ENCODE measurements at regions of chr9 and their contacts with region 1.

Region 1: GRCh38 chr9:122125158-122125508 is 32.0 kb upstream of the TTLL11 start:
- DNase-seq: peak; percentile 70
- H3K4me3 ChIP-seq: no peak overlapping the region
- H3K27ac ChIP-seq: no peak overlapping the region
- H3K4me1 ChIP-seq: peaks cover 22% of the 10 kb centered on the region
- H3K27me3 ChIP-seq: no peaks in the 10 kb centered on the region
- CTCF ChIP-seq: peak; percentile 90 to 99

Region 2: DNA sequence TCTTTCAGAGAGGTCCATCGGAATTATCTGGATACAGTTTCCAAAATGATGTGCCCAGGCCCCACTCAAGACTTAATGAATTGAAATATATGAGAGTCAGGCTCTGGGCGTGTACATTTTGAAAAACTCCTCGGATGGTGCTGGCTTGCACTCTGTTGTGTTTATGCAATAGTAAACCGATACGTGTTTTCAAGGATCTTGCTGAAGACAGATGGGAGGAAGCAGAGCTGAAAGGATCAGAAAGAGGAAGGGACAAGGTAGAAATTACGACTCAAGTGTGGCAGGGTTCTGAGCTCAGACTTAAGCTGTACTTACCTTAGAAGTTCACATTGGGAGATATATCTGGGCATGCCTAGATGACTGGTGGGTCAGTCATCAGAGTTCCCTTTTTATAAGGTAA is 741.4 kb before region 1 on chr9:
- CTCF ChIA-PET with region 1: no interaction called
- dilution Hi-C with region 1: no loop called
- in situ Hi-C with region 1: no loop called
- intact Hi-C with region 1: no loop called
- DNase-seq: no peak
- H3K4me3 ChIP-seq: no peak overlapping the region
- H3K27ac ChIP-seq: no peak overlapping the region
- H3K4me1 ChIP-seq: no peaks in the 10 kb centered on the region
- H3K27me3 ChIP-seq: no peaks in the 10 kb centered on the region
- CTCF ChIP-seq: no peak

Region 3: DNA sequence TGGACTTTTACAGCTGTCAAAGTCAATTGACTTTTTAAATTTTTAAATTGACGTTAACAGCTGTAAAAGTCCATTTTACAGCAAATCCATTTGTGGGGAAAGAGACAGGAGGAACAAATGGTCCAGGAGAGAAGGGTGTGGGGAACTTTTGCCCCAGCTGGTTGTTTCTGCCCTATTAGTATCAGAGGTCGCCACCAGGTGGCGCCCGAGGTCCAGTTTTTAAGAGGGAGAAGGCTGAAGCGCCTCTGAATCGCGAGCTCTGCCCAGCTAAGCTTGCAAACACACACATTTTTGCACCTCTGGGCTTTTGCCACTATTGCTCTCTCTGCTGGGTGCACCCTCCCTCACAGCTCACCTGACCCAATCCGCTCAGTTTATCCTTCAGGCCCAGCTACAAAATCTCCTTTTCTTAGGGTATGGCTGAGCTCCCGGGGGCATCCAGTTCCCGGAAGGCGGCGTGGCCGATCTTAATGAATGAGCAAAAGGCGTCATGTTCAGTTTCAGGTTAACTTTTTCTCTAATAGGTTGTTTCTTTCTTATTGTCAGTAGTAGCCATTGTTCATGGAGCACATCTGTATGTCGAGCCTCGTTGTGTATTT is 25.8 kb before region 1 on chr9:
- CTCF ChIA-PET with region 1: interaction called, 6 read pairs
- dilution Hi-C with region 1: no loop called
- in situ Hi-C with region 1: no loop called
- intact Hi-C with region 1: loop called (anchors 1 kb)
- DNase-seq: peak; percentile 54
- H3K4me3 ChIP-seq: peak overlapping the region in 2 of 3 experiments; percentile 1 to 17
- H3K27ac ChIP-seq: no peak overlapping the region
- H3K4me1 ChIP-seq: no peaks in the 10 kb centered on the region
- H3K27me3 ChIP-seq: no peaks in the 10 kb centered on the region
- CTCF ChIP-seq: peak; percentile 76 to 81

Region 4: DNA sequence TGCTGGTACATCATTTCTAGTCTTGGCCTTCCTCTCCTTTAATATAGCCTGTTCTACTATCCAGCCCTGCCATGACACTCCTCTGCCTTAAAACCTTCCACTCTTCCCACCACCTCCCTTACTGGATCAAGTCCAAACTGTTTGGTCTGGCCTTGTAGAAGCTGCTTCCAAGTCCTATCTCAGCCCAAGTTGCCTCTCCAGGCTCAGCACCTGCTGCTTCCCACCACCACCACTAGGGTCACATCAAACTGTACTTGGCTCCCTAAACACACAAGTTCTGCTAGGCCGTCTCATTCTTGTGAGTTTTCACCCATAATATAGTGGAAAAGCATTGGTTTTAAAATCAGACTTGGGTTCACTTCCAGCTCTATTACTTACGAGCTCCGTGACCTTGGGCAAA is 33.1 kb after region 1 on chr9:
- CTCF ChIA-PET with region 1: no interaction called
- dilution Hi-C with region 1: no loop called
- in situ Hi-C with region 1: no loop called
- intact Hi-C with region 1: no loop called
- DNase-seq: peak; percentile 39
- H3K4me3 ChIP-seq: no peak overlapping the region
- H3K27ac ChIP-seq: no peak overlapping the region
- H3K4me1 ChIP-seq: peaks cover 3% of the 10 kb centered on the region
- H3K27me3 ChIP-seq: no peaks in the 10 kb centered on the region
- CTCF ChIP-seq: peak; percentile 65 to 82

Region 5: DNA sequence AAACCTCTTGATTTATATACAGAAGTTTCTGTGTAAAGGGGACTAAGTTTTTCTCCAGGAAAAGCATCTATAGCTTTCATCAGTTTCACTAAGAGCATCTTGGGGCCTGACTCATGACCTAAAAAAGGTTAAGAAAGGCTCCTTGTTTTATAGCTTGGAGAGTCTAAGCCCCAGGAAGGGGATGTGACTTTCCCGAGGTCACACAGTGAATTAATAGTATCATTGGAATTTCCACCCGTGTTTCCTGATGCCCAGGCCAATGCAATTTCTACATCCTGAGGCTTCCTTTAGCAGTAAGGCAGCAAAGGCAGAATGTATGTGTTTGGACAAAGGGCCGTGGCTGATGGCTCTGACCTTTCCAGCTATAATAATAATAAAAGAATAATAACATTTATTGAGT is 43.2 kb after region 1 on chr9:
- CTCF ChIA-PET with region 1: no interaction called
- dilution Hi-C with region 1: no loop called
- in situ Hi-C with region 1: no loop called
- intact Hi-C with region 1: no loop called
- DNase-seq: peak; percentile 34
- H3K4me3 ChIP-seq: no peak overlapping the region
- H3K27ac ChIP-seq: no peak overlapping the region
- H3K4me1 ChIP-seq: no peaks in the 10 kb centered on the region
- H3K27me3 ChIP-seq: no peaks in the 10 kb centered on the region
- CTCF ChIP-seq: no peak

Region 6: DNA sequence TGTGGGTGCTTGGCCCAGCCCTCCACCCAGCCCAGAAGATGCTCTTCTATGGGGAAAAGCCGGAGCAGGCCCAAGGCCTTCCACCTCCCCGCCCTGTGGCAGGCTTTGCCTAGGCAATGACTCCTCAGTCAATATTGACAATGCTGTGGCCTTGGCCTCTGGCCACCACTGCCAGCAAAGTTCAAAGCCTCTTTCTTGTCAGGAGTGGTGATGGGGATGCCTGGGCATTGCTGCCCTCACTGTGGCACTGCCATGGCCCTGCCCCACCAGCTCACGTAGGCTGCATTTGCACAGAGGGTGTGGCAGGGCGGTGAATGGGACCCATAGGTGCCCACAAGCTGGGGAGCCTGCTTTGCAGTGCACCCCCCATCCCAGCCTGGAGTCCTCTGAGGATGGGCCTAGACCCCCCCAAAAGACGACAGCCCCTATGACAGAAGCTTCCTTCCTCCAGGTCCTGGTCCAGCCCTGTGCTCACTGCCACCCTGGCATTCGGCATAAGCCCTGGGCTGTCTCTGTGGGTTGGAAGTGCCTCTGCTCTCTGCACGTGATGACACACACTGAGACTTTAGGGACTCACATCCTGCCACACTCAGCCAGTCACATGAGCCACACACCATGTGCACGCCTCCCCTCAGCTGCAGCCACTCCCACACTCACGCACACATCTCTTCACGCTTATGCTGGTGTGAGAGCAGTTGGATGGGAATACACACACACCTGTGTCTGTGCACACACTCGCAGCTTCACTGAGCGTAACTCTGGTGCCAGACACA is 65.7 kb after region 1 on chr9:
- CTCF ChIA-PET with region 1: no interaction called
- dilution Hi-C with region 1: no loop called
- in situ Hi-C with region 1: no loop called
- intact Hi-C with region 1: loop called (anchors 1 kb)
- DNase-seq: peak; percentile 62
- H3K4me3 ChIP-seq: no peak overlapping the region
- H3K27ac ChIP-seq: peak overlapping the region; percentile 51
- H3K4me1 ChIP-seq: peaks cover 24% of the 10 kb centered on the region
- H3K27me3 ChIP-seq: no peaks in the 10 kb centered on the region
- CTCF ChIP-seq: no peak

Region 7: GRCh38 chr9:122264360-122265148 is 139.4 kb after region 1 on chr9 and contains the starts of genes MRRF and RBM18:
- CTCF ChIA-PET with region 1: interaction called, 5 read pairs
- dilution Hi-C with region 1: no loop called
- in situ Hi-C with region 1: no loop called
- intact Hi-C with region 1: loop called (anchors 1 kb)
- DNase-seq: peak; percentile 91
- H3K4me3 ChIP-seq: peak within 1 kb of the TSS; percentile 72 to 80 (median 77)
- H3K27ac ChIP-seq: peak within 1 kb of the TSS; percentile 95
- H3K4me1 ChIP-seq: peaks cover 28% of the 10 kb centered on the region
- H3K27me3 ChIP-seq: no peaks in the 10 kb centered on the region
- CTCF ChIP-seq: no peak
- total RNA-seq, gene MRRF: 43.0 to 52.0 TPM
- total RNA-seq, gene RBM18: 14.3 to 39.7 TPM

Region 8: DNA sequence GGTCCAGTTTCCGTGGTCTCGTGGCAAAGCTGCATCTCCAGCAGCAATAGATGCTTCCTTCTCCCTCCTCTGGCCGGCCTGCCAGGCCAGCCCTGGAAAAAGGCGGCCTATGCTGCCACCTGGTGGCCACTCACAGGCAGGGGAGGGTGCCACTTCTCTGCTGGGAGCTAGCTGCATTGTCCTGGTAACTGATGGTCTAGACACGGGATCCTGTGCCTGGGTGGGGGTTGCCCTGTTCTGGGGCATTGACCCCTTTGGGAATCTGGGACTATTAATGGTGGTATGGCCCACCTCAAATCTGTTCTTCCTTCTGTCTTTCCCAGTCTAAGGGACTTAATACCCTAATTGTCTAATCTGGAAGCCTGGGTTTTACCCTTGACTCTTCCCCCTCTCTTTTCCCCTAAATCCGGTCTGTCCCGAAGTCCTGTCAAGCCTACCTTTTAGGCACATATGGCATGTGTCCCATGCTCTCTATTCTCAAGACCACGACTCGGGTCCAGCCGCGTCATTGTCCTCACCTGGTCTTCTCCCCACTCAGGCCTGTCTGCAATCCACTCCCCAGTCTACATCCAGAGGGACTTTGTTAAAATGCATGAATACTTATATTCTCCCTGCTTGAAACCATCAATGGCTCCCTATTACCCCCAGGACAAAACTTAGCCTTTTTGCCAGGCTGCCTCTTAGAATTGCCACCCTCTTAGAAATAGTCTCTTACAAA is 225.7 kb after region 1 on chr9:
- CTCF ChIA-PET with region 1: interaction called, 10 read pairs
- dilution Hi-C with region 1: no loop called
- in situ Hi-C with region 1: loop called in 1 of 2 experiments (anchors 5 kb)
- intact Hi-C with region 1: loop called (anchors 1 kb)
- DNase-seq: peak; percentile 60
- H3K4me3 ChIP-seq: no peak overlapping the region
- H3K27ac ChIP-seq: no peak overlapping the region
- H3K4me1 ChIP-seq: peaks cover 13% of the 10 kb centered on the region
- H3K27me3 ChIP-seq: no peaks in the 10 kb centered on the region
- CTCF ChIP-seq: peak; percentile 94

Region 9: DNA sequence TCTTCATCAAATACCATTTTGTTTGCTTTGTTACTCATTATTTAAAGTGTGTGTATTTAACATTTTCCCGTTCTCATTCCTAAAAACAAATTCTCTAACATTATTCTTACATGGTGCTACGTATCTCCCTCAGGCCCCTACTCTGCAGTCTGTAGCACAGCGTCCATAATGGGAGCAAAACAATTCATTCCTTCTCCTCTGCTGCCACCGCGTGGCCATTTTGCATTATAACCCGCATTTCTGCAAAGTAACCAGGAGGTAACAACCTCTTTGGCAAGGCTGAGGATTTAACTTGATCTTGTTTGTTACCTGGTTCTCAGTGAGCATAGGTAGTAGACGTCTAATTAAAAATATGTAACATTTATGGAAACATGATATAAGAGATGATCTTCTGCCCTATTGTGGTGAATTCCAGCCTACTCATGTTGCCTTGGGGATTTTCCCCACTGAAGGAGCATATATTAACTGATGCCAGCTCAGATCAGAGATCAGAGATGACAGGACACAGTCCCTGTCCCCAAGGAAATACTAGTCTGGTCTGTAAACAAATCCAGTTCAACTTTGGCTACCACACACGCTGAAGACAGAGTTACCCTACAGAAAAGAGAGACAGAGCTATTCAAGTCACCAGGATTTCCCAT is 685.3 kb after region 1 on chr9:
- CTCF ChIA-PET with region 1: interaction called, 28 read pairs
- dilution Hi-C with region 1: no loop called
- in situ Hi-C with region 1: no loop called
- intact Hi-C with region 1: loop called (anchors 1 kb)
- DNase-seq: peak; percentile 62
- H3K4me3 ChIP-seq: no peak overlapping the region
- H3K27ac ChIP-seq: no peak overlapping the region
- H3K4me1 ChIP-seq: peaks cover 1% of the 10 kb centered on the region
- H3K27me3 ChIP-seq: no peaks in the 10 kb centered on the region
- CTCF ChIP-seq: peak; percentile 62 to 72

Measured in mammary epithelial cell (primary cell).